RWPE1 (cell line): ENCODE measurements at regions of chr10 and their contacts with region 1.

Region 1: DNA sequence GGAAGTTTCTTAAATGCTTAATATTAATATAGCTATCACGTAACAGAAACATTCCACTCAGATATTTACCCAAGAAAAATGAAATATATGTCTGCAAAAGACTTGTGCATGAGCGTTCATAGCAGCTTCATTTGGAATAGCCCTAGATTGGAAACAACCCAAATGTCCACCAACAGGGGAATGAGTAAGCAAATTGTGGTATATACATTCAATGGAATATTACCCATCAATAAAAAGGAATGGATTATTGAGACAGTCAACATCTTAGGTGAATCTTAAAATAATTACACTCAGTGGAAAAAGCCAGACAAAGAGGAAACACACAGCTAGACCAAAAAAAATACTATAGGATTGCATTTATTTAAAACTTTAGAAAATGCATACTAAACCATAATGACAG is 90.4 kb upstream of the KAT6B start:
- DNase-seq: no peak
- H3K27ac ChIP-seq: no peak overlapping the region
- CTCF ChIP-seq: no peak

Region 2: DNA sequence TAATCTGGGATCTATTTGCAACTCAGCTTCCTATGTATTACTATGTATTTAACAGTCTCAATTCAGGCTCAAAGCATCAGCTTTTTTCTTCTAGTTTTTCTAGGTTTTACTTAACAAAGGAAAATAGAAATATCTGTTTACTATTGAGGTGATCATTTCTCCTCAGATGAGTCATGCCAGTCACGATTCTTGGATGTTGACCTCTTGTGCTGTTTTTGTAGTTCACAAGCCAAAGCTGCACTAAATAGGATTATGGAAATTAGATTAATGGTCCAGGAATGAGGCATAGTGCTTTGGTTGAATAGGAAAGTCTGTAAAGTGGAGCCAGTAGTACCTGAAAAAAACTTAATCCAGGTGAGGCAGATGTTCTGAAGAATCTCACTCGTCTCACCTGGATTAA is 107.9 kb before region 1 on chr10:
- CTCF ChIA-PET with region 1: interaction called, 10 read pairs
- POLR2A ChIA-PET with region 1: no interaction called
- DNase-seq: no peak
- H3K27ac ChIP-seq: no peak overlapping the region
- CTCF ChIP-seq: no peak

Region 3: DNA sequence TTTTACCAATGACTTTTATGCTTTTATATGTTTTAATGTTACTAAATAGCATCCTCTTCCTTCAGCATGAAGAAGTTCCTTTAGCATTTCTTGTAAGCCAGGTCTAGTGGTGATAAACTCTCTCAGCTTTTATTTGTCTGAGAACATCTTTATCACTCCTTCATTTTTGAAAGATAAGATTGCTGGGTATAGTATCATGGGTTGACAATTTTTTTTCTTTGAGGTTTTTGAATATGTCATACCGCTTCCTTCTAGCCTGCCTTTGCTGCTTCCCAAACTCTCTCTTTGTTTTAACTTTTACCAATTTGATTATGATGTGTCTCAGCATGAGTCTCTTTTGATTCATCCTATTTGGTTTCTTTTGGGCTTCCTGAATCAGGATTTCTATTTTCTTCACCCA is 17.8 kb before region 1 on chr10:
- CTCF ChIA-PET with region 1: no interaction called
- POLR2A ChIA-PET with region 1: no interaction called
- DNase-seq: no peak
- H3K27ac ChIP-seq: no peak overlapping the region
- CTCF ChIP-seq: no peak

Region 4: DNA sequence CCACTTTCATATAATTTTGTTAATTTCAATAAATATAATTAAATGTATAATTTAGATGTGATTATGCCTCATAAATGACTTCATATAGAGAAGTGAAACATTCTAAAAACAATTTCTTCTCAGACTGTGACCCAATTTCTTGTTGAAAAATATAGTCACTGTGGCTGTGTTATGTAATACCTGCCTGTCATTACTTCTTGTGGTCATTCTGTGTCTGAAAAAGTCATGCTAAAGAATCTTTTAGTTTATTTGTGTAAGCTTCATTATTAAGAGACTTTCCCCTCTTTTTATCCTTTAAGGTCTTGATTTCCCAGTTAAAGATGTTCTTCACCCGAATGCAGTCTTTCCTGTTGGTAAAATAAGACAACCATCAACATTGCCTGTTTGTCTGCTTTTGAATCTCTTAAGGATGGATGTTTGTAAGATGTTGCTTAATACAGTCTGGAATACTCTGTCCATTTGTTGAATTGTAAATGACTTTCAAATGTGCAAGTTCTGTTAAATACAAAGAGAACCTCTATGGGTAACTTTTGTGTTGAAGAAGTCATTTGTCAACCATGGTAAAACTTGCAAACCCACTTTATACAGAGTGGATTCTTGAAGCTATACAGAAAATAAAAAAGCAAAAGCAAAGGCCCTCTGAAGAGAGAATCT is 106.4 kb after region 1 on chr10:
- CTCF ChIA-PET with region 1: no interaction called
- POLR2A ChIA-PET with region 1: no interaction called
- DNase-seq: no peak
- H3K27ac ChIP-seq: no peak overlapping the region
- CTCF ChIP-seq: no peak